ENCODE measurements at regions of chr10 and their contacts with region 1.

Region 1: DNA sequence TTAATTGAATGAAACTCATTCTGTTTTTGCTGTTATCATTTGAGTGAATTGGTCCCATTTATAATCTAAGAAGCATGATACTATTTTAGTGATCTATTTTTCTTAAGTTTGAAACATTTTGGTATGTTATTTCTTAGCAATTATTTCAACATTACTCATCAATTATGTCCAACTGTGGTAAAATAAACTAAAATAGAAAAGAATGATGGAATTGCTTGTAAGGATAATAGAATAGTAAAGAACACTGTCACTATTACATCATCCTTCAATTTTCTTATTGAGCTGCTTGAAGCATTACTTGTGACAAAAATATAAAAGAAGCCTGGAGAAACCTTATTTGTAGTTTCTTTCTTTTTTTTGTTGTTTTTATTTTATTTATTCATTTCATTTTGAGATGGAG is 42.4 kb downstream of the ZNF487 start:
- DNase-seq: no peak
- ATAC-seq: no peak
- H3K4me3 ChIP-seq: no peak overlapping the region
- H3K27ac ChIP-seq: no peak overlapping the region
- H3K4me1 ChIP-seq: no peaks in the 10 kb centered on the region
- H3K27me3 ChIP-seq: no peaks in the 10 kb centered on the region
- CTCF ChIP-seq: no peak

Region 2: DNA sequence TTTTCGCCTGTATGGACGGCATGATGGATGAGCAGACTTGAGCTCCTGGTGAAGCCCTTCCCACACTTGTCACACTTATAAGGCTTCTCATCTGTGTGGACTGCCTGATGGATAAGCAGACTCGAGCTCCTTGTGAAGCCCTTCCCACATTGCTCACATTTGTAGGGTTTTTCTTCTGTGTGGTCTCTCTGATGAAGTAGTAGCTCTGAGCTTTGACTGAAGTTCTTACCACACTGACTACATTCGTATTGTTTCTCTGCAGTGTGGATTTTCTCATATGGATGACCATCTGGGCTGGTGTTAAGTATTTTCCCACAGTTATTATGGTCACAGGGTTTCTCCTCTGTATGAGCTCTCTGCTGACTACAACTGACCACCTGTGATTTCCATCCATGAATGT is 77.9 kb after region 1 on chr10:
- intact Hi-C with region 1: loop called in 1 of 3 experiments (anchors 10 kb)
- DNase-seq: no peak
- ATAC-seq: no peak
- H3K4me3 ChIP-seq: no peak overlapping the region
- H3K27ac ChIP-seq: no peak overlapping the region
- H3K4me1 ChIP-seq: no peaks in the 10 kb centered on the region
- H3K27me3 ChIP-seq: no peaks in the 10 kb centered on the region
- CTCF ChIP-seq: no peak

Measured in pancreas (tissue), 10 donors.